OCI-LY7 (cell line): ENCODE measurements at regions of chr12 and their contacts with region 1.

Region 1: DNA sequence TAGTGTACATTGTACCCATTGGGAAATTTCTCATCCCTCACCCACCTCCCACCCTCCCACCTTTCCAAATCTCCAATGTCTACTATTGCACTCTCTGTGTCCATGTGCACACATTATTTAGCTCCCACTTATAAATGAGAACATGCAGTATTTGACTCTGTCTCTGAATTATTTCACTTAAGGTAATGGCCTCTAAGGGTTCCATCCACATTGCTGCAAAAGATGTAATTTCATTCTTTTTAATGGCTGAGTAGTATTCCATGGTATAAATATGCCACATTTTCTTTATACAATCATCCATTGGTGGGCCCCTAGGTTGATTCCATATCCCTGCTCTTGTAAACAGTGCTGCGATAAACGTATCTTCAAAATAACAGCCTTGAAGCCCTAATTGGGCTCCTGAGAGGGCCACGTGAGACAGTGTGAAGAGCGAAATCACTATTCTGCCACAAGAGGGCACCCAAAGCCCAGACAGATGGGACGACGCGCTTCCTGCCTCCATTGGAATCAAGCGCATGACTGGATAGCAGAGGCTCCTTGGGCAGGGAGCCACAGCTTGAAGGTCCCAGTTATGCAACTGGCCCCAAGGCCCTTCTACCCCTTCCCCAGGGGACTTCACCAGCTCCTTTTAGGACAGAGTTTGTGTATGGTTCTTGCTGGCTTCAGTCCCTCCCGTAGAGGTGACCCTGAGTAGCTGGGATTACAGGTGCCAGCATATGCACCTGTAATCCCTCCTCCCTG is 21.3 kb upstream of the CD27 start:
- DNase-seq: peak; percentile 92
- H3K4me3 ChIP-seq: no peak overlapping the region
- H3K27ac ChIP-seq: peak overlapping the region; percentile 1
- H3K4me1 ChIP-seq: peaks cover 53% of the 10 kb centered on the region
- CTCF ChIP-seq: peak; percentile 93

Region 2: DNA sequence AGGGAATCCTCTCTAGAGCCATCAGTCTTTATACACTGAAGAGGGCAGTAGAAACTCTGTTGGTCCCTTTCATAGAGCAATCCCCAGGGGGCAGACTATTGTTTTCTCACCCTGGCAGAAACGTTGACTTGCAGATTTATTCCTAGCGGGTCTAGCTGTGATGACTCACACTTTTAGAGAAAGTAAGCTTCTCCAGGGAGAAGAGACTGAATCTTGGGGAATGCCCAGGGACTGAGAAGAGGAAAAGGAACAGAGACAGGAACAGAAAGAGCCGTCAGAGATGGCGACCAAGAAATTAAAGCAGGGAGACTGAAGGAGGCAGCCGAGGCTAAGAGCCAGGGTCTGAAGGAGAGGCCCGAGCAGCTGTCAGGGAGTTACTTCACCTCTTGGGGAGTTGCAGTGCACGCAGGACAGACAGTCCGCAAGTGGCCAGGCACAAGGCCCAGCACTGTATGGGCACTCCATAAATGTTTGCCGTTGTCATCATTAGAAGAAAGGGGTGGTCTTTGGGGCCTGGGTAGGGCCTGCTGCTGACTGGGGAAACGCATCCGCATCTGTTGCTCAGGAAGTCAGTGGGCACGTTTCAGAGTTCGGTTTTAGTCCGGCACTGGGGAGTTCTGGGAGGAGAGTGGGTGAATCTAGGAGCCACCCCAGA is 100.0 kb before region 1 on chr12:
- CTCF ChIA-PET with region 1: no interaction called
- POLR2A ChIA-PET with region 1: no interaction called
- intact Hi-C with region 1: loop called (anchors 1 kb)
- DNase-seq: peak; percentile 77
- H3K4me3 ChIP-seq: peak overlapping the region; percentile 34
- H3K27ac ChIP-seq: peak overlapping the region; percentile 59
- H3K4me1 ChIP-seq: peaks cover 30% of the 10 kb centered on the region
- CTCF ChIP-seq: peak; percentile 88

Region 3: DNA sequence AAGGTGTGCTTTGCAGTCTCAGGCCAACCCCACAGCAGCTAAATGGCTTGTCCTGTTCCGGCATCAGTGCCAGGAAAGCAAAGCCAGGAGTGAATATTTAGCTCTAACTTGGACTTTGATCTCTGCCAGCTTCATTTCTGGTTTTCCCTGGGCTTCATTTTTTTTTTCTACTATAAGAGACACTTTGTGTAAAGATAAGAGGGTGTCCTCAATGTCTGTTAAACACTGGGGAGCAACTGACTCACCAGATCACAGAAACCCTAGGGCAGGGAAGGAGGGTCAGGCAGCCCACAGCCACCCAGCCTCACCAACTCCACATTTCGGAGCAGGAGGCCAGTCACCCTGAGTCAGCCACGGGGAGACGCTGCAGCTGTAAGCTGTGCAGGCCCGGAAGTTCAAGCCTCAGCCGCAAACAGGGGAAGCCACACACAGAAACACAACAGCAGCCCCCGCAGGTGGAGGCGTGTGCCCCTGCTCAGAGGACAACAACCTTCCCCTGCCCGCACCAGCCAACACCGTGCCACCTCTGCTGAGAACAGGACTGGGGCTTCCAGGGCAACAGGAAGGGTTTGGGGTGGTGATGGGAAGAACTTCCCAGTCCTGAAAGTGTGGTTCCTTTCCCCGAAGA is 87.9 kb before region 1 on chr12:
- CTCF ChIA-PET with region 1: no interaction called
- POLR2A ChIA-PET with region 1: interaction called, 5 read pairs
- intact Hi-C with region 1: loop called (anchors 2 kb)
- DNase-seq: peak; percentile 90
- H3K4me3 ChIP-seq: peak overlapping the region; percentile 53
- H3K27ac ChIP-seq: peak overlapping the region; percentile 80
- H3K4me1 ChIP-seq: peaks cover 72% of the 10 kb centered on the region
- CTCF ChIP-seq: peak; percentile 89

Region 4: GRCh38 chr12:6443361-6443983 is 20.0 kb after region 1 on chr12:
- CTCF ChIA-PET with region 1: interaction called, 4 read pairs
- POLR2A ChIA-PET with region 1: interaction called, 74 read pairs
- intact Hi-C with region 1: no loop called
- DNase-seq: peak; percentile 85
- H3K4me3 ChIP-seq: peak overlapping the region; percentile 41
- H3K27ac ChIP-seq: peak overlapping the region; percentile 96
- H3K4me1 ChIP-seq: peaks cover 73% of the 10 kb centered on the region
- CTCF ChIP-seq: no peak

Region 5: GRCh38 chr12:6533923-6534694 is 110.7 kb after region 1 on chr12 and contains the start of gene GAPDH:
- CTCF ChIA-PET with region 1: interaction called, 4 read pairs
- POLR2A ChIA-PET with region 1: interaction called, 11 read pairs
- intact Hi-C with region 1: loop called (anchors 1 kb)
- DNase-seq: peak; percentile 99
- H3K4me3 ChIP-seq: peak within 1 kb of the TSS; percentile 93
- H3K27ac ChIP-seq: peak within 1 kb of the TSS; percentile 95
- H3K4me1 ChIP-seq: peaks cover 47% of the 10 kb centered on the region
- CTCF ChIP-seq: no peak
- total RNA-seq, gene GAPDH: 3,369 and 3,801 TPM in 2 replicates

Region 6: GRCh38 chr12:6554168-6555017 is 131.0 kb after region 1 on chr12:
- CTCF ChIA-PET with region 1: no interaction called
- POLR2A ChIA-PET with region 1: no interaction called
- intact Hi-C with region 1: loop called (anchors 1 kb)
- DNase-seq: peak; percentile 91
- H3K4me3 ChIP-seq: peak overlapping the region; percentile 92
- H3K27ac ChIP-seq: peak overlapping the region; percentile 49
- H3K4me1 ChIP-seq: peaks cover 40% of the 10 kb centered on the region
- CTCF ChIP-seq: peak; percentile 81

Region 7: DNA sequence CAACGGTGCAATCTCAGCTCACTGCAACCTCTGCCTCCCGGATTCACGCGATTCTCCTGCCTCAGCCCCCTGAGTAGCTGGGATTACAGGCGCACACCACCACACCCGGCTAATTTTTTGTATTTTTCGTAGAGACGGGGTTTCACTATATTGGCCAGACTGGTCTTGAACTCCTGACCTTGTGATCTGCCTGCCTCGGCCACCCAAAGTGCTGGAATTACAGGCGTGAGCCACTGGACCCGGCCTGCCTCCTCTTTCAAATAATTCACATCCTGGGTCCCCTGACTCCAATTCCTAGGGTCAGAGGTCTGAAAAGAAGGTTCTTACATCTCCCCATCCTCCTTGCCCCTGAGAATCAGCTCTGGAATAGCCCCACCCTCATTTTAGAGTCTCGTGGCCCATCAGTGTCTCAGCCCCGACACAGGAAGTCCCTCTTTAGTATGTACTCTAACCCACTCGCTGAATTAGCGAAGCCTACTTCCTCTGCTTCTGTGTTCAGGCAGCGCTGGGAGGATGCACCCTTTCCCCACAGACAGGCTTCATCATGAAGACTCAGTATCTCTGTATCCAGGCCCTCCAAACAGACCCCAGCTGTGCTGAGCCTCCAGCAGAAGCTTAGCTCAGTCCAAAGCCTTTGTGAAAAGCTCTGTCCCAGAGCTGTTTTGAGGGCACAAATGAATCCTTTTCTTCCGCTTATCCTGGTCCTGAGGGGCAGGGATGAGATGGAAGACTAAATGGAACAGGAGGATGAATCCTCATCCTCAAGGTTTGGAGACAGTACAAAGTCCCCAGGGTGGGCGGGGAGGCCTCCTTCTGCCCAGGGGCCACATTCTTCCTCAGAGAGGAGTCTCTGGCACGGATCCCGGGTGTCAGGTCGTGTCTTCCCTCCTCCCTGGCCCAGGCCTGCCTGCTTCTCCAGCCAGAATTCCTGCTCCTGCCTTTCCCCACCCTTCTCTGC is 208.9 kb after region 1 on chr12:
- CTCF ChIA-PET with region 1: no interaction called
- POLR2A ChIA-PET with region 1: no interaction called
- intact Hi-C with region 1: no loop called
- DNase-seq: peak; percentile 96
- H3K4me3 ChIP-seq: peak overlapping the region; percentile 68
- H3K27ac ChIP-seq: peak overlapping the region; percentile 97
- H3K4me1 ChIP-seq: peaks cover 87% of the 10 kb centered on the region
- CTCF ChIP-seq: no peak